HepG2 (cell line): ENCODE measurements at regions of chrX and their contacts with region 1.

Region 1: DNA sequence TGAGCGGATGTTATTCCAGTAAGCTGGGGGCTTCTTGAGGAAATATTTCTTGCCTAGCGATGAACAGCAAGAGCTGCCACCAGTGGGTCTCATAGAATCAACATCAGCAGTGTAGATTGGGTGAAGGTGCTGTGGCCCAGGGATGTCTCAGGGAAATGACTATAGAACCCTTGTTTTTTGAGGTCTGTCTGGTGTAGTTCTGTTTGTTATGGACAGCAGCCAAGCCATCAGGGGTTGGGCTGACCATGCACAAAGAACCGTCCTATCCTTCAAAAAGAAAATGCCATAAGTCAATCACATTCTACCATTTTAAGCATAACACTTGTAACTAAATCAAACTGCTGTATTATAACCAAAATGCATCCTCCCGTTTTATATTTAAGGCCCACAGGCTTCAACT is 17.3 kb upstream of the C1GALT1C1 start:
- DNase-seq: peak; percentile 43
- ATAC-seq: peak; percentile 66; the same call in 2 of the 3 replicates
- H3K4me3 ChIP-seq: no peak overlapping the region
- H3K27ac ChIP-seq: no peak overlapping the region
- H3K4me1 ChIP-seq: peaks cover 12% of the 10 kb centered on the region
- H3K27me3 ChIP-seq: no peaks in the 10 kb centered on the region
- CTCF ChIP-seq: no peak
- EP300 ChIP-seq: no peak
- POLR2A ChIP-seq: no peak
- RAD21 ChIP-seq: no peak

Region 2: GRCh38 chrX:120629667-120630537 is 17.2 kb before region 1 on chrX and contains the start of gene C1GALT1C1:
- CTCF ChIA-PET with region 1: no interaction called
- POLR2A ChIA-PET with region 1: no interaction called
- in situ Hi-C with region 1: no loop called
- intact Hi-C with region 1: loop called (anchors 1 kb)
- DNase-seq: peak; percentile 88
- ATAC-seq: peak; percentile 99
- H3K4me3 ChIP-seq: peak within 1 kb of the TSS; percentile 62 to 73 (median 68)
- H3K27ac ChIP-seq: peak within 1 kb of the TSS; percentile 84
- H3K4me1 ChIP-seq: peaks cover 10% of the 10 kb centered on the region
- H3K27me3 ChIP-seq: no peaks in the 10 kb centered on the region
- CTCF ChIP-seq: peak; percentile 40
- EP300 ChIP-seq: no peak
- POLR2A ChIP-seq: peak; percentile 53 to 63; a peak in 3 of 4 replicates
- RAD21 ChIP-seq: no peak
- total RNA-seq, gene C1GALT1C1: 18.2 and 31.9 TPM in 2 replicates